ENCODE measurements at regions of chr14 and their contacts with region 1.

Region 1: GRCh38 chr14:92106143-92106926 is at the start of gene ATXN3:
- DNase-seq: peak; percentile 97
- ATAC-seq: peak; percentile 86
- H3K4me3 ChIP-seq: peak within 1 kb of the TSS; percentile 74 to 90 (median 81)
- H3K4me3 Mint-ChIP-seq: peak within 1 kb of the TSS; percentile 98
- H3K27ac ChIP-seq: peak within 1 kb of the TSS; percentile 77 to 83
- H3K27ac Mint-ChIP-seq: peak within 1 kb of the TSS; percentile 90
- H3K4me1 ChIP-seq: peaks cover 5 to 27% of the 10 kb centered on the region in 2 donors
- H3K4me1 Mint-ChIP-seq: peaks cover 41% of the 10 kb centered on the region
- H3K27me3 ChIP-seq: no peaks in the 10 kb centered on the region
- H3K27me3 Mint-ChIP-seq: no peaks in the 10 kb centered on the region
- CTCF ChIP-seq: peak; percentile 77
- total RNA-seq, gene ATXN3: 51.6 and 59.5 TPM in 2 replicates

Region 2: DNA sequence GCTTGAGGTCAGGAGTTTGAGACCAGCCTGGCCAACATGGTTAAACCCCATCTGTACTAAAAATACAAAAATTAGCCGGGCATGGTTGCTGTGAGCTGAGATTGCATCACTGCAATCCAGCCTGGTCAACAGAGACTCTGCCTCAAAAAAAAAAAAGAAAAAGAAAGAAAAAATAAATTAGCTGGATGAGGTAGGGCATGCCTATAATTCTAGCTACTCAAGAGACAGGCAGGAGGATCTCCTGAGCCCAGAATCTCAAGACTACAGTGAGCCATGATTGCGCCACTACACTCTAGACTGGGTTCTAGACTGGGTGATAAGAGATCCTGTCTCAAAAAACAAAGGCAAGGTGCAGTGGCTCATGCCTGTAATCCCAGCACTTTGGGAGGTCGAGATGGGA is 613.2 kb before region 1 on chr14:
- CTCF ChIA-PET with region 1: no interaction called
- POLR2A ChIA-PET with region 1: interaction called, 14 read pairs
- intact Hi-C with region 1: no loop called
- DNase-seq: no peak
- ATAC-seq: no peak
- H3K4me3 ChIP-seq: no peak overlapping the region
- H3K4me3 Mint-ChIP-seq: no peak overlapping the region
- H3K27ac ChIP-seq: peak overlapping the region in 1 of 2 donors; percentile 40
- H3K27ac Mint-ChIP-seq: peak overlapping the region; percentile 70
- H3K4me1 ChIP-seq: peaks cover 61 to 65% of the 10 kb centered on the region in 2 donors
- H3K4me1 Mint-ChIP-seq: peaks cover 61% of the 10 kb centered on the region
- H3K27me3 ChIP-seq: no peaks in the 10 kb centered on the region
- H3K27me3 Mint-ChIP-seq: no peaks in the 10 kb centered on the region
- CTCF ChIP-seq: no peak

Region 3: DNA sequence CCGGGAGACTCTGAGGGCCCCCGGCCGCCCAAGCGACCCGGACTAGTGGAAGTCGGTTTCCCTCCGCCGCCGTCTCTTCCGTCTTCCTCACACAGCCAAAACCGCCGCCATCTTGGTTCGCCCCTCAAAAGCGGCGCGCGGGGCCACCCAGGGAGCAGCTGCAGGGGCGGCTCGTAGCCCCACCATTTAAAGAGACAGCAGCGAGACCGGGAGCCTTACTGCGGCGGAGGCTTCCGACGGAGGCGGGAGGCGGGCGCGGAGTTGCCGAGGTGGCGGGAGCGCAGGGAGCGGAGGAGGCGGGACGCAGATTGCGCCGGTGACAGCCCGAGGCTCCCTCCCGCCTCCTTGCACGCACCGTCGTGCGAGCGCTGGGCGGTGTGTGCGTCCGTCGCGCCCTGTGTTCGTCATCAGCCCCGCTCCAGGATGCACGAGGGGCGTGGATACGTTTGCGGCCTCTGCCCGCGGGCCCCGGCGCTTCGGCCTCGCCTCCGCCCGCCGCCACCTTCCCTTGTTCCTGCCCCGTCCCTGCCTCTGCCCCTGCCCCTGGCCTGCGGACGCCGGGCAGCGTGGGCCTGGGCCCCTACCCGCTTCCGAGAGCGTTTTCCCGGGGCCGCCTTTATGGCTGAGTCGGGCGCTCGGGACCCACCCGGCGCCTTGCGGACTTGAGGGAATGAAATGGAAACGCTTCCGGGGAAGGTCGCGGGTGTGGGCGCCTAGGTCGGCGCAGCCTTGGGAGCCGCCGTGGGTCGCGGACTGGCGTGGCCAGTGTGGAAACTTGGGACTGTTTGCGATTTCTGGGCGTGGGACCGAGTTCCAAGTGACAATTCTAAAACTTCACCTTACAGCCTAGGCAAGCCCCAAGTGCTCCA is 595.9 kb before region 1 on chr14 and contains the start of gene PPP4R3A:
- CTCF ChIA-PET with region 1: no interaction called
- POLR2A ChIA-PET with region 1: no interaction called
- intact Hi-C with region 1: loop called (anchors 1 kb)
- DNase-seq: peak; percentile 97
- ATAC-seq: peak; percentile 87
- H3K4me3 ChIP-seq: peak within 1 kb of the TSS; percentile 72 to 99 (median 84)
- H3K4me3 Mint-ChIP-seq: peak within 1 kb of the TSS; percentile 99
- H3K27ac ChIP-seq: peak within 1 kb of the TSS; percentile 97 to 100
- H3K27ac Mint-ChIP-seq: peak within 1 kb of the TSS; percentile 100
- H3K4me1 ChIP-seq: peaks cover 32% of the 10 kb centered on the region in 2 donors
- H3K4me1 Mint-ChIP-seq: peaks cover 37% of the 10 kb centered on the region
- H3K27me3 ChIP-seq: no peaks in the 10 kb centered on the region
- H3K27me3 Mint-ChIP-seq: no peaks in the 10 kb centered on the region
- CTCF ChIP-seq: no peak
- total RNA-seq, gene PPP4R3A: 184 and 189 TPM in 2 replicates

Region 4: DNA sequence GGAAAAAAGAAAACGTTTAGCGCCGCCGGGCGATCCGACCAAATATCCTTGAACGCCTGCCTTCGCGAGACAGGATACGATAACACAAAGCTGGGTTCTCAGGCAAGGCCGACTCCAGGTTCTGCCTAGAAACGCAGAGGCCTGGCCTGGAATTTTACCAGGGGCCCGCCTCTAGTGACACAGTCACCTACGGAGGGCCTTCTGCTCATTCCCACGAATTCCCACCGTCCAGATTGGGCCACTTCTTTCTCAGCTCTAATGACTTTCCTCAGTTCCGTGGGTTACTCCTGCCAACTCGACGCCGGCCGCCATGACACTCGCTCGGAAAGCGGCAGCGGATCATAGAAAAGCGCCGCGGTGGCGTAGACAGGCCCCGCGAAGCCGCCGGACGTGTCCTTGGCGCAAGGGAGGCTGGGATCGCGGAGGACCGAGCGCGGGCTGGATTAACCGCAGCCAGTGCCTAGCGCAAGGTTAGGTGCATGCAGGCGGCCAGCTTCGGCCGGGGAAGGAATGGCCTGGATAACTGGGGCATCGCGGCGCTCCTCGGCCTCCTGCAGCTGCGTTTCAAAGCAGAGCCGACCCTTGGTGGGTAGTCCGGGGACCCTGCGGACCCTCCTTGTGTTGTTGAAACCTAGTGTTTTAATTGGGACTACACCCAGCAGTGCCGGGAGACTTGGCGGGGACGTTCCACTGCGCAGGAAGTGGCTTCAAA is 66.5 kb before region 1 on chr14 and contains the start of gene TRIP11:
- CTCF ChIA-PET with region 1: interaction called, 19 read pairs
- POLR2A ChIA-PET with region 1: interaction called, 15 read pairs
- intact Hi-C with region 1: loop called (anchors 1 kb)
- DNase-seq: peak; percentile 95
- ATAC-seq: peak; percentile 96
- H3K4me3 ChIP-seq: peak within 1 kb of the TSS; percentile 66 to 90 (median 87)
- H3K4me3 Mint-ChIP-seq: peak within 1 kb of the TSS; percentile 93
- H3K27ac ChIP-seq: peak within 1 kb of the TSS; percentile 85 to 93
- H3K27ac Mint-ChIP-seq: peak within 1 kb of the TSS; percentile 94
- H3K4me1 ChIP-seq: peaks cover 19 to 24% of the 10 kb centered on the region in 2 donors
- H3K4me1 Mint-ChIP-seq: peaks cover 40% of the 10 kb centered on the region
- H3K27me3 ChIP-seq: no peaks in the 10 kb centered on the region
- H3K27me3 Mint-ChIP-seq: no peaks in the 10 kb centered on the region
- CTCF ChIP-seq: no peak
- total RNA-seq, gene TRIP11: 62.2 and 69.9 TPM in 2 replicates

Region 5: DNA sequence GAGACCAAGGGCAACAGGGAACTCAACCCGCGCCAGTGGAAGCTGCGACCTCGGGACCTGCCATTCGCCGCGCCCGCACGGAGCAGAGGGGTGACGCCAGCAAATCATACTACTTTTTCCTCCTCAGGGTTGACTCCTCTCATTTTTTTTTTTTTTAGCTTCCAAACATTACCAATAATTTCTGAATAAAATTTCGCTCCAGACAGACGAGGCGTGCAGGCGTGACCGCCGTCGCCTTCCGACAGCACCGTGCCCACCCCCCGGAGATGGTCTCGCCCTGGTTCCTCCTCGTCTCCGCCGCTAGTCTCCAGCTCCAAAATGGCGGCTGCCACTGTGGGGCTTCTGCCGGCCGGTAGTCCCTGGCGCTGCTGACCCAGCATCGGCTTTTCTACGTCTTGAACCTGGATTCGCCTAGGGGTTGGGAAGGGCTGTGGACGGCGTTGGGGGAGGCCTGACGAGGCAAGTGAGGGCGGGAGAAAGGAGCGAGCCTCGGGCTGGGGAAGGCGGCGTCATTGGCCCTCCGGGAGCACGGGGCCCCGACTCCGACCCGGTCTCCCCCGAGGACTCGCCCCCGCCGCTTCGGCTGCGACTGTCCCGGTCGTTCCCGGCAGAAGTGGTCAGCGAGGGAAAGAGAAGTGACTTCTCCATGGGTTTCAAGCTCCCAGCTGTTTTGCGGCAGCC is 15.5 kb after region 1 on chr14 and contains the starts of genes CPSF2 and NDUFB1:
- CTCF ChIA-PET with region 1: interaction called, 50 read pairs
- POLR2A ChIA-PET with region 1: interaction called, 25 read pairs
- intact Hi-C with region 1: loop called (anchors 1 kb)
- DNase-seq: peak; percentile 94
- ATAC-seq: peak; percentile 89
- H3K4me3 ChIP-seq: peak within 1 kb of the TSS; percentile 85 to 99 (median 90)
- H3K4me3 Mint-ChIP-seq: peak within 1 kb of the TSS; percentile 97
- H3K27ac ChIP-seq: peak within 1 kb of the TSS; percentile 87 to 96
- H3K27ac Mint-ChIP-seq: peak within 1 kb of the TSS; percentile 100
- H3K4me1 ChIP-seq: peaks cover 9 to 29% of the 10 kb centered on the region in 2 donors
- H3K4me1 Mint-ChIP-seq: peaks cover 38% of the 10 kb centered on the region
- H3K27me3 ChIP-seq: no peaks in the 10 kb centered on the region
- H3K27me3 Mint-ChIP-seq: no peaks in the 10 kb centered on the region
- CTCF ChIP-seq: no peak
- total RNA-seq, gene CPSF2: 42.6 and 46.1 TPM in 2 replicates
- total RNA-seq, gene NDUFB1: 61.6 and 63.7 TPM in 2 replicates

Region 6: DNA sequence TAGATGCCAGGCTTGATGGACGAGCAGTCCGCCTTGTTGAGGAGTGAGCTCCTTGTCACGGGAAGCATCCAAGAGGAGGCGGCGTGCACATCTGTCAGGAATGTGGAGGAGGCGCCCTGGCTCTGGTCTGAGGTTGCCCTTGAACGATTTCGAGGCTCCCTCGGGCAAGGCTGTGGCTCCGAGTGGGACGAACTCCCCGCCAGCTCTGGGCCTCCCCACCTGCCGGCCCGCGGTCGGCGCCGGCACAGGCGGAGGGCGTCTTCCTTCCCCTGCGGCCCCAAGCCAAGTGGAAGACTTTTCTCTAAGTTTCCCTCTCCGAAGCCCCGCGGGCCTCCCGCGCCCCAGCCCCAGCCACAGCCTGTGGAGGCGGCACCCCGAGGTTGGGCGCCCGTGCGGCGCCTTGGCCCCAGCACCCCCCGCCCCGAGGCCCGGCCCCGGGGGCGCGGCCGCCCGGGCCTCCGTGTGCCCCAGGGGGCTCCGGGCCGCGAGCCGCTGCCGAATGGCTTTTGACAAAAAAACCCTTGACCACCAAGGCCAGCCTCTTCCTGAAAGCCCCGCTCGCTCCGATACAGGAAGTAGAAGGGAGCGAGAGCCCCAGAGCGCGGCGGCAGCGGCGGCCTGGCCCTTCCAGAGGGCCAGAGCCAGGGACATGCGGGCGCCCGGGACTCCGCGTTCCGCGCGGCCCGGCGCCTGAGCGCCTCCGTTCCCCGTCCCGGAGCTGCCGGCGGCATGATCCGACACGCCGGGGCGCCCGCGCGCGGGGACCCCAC is 407.1 kb after region 1 on chr14 and contains the start of gene RIN3:
- CTCF ChIA-PET with region 1: no interaction called
- POLR2A ChIA-PET with region 1: no interaction called
- intact Hi-C with region 1: loop called (anchors 1 kb)
- DNase-seq: peak; percentile 68
- ATAC-seq: peak; percentile 64
- H3K4me3 ChIP-seq: peak within 1 kb of the TSS; percentile 39 to 79 (median 72)
- H3K4me3 Mint-ChIP-seq: peak within 1 kb of the TSS; percentile 83
- H3K27ac ChIP-seq: peak within 1 kb of the TSS; percentile 55 to 67
- H3K27ac Mint-ChIP-seq: peak within 1 kb of the TSS; percentile 79
- H3K4me1 ChIP-seq: peaks cover 33 to 55% of the 10 kb centered on the region in 2 donors
- H3K4me1 Mint-ChIP-seq: peaks cover 54% of the 10 kb centered on the region
- H3K27me3 ChIP-seq: peaks cover 0 to 6% (median 0%) of the 10 kb centered on the region in 4 experiments
- H3K27me3 Mint-ChIP-seq: no peaks in the 10 kb centered on the region
- CTCF ChIP-seq: no peak
- total RNA-seq, gene RIN3: 123 and 124 TPM in 2 replicates

Measured in B cell (primary cell).